OCI-LY7 (cell line): ENCODE measurements at regions of chr2 and their contacts with region 1.

Region 1: DNA sequence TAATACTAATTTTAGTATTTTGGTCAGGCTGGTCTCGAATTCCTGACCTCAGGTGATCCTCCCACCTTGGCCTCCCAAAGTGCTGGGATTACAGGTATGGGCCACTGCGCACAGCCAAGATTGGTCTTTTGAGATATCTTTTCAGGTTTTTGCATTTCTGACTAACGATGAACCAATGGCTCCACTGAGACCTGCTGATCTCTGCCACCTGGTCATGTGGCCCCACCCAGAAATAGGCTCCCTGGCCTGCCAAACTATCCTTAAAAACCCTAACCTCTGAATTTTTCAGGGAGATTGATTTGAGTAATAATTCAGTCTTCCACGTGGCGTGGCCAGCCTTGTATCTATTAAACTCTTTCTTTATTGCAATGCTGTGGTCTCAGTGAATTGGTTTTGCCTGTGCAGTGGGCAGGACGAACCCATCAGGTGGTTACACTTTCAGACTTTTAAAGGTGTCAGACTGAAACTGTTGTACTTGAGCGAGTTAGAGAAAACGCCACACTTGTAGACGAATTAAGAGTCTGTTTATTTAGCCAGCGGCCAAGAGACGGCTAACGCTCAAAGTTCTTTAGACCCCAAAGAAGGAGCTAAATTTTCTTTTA is 85.8 kb upstream of the MSH6 start:
- DNase-seq: peak; percentile 79
- H3K4me3 ChIP-seq: peak overlapping the region; percentile 99
- H3K27ac ChIP-seq: peak overlapping the region; percentile 97
- H3K4me1 ChIP-seq: peaks cover 58% of the 10 kb centered on the region
- CTCF ChIP-seq: no peak

Region 2: GRCh38 chr2:47402805-47403608 is 294.1 kb before region 1 on chr2 and contains the start of gene MSH2:
- CTCF ChIA-PET with region 1: no interaction called
- POLR2A ChIA-PET with region 1: no interaction called
- intact Hi-C with region 1: loop called (anchors 5 kb)
- DNase-seq: peak; percentile 98
- H3K4me3 ChIP-seq: peak within 1 kb of the TSS; percentile 86
- H3K27ac ChIP-seq: peak within 1 kb of the TSS; percentile 68
- H3K4me1 ChIP-seq: peaks cover 20% of the 10 kb centered on the region
- CTCF ChIP-seq: no peak; the same call in 1 of the 2 replicates
- total RNA-seq, gene MSH2: 96.8 and 107 TPM in 2 replicates

Region 3: GRCh38 chr2:47520825-47521665 is 176.1 kb before region 1 on chr2:
- CTCF ChIA-PET with region 1: no interaction called
- POLR2A ChIA-PET with region 1: interaction called, 12 read pairs
- intact Hi-C with region 1: loop called (anchors 1 kb)
- DNase-seq: peak; percentile 97
- H3K4me3 ChIP-seq: peak overlapping the region; percentile 77
- H3K27ac ChIP-seq: peak overlapping the region; percentile 96
- H3K4me1 ChIP-seq: peaks cover 60% of the 10 kb centered on the region
- CTCF ChIP-seq: peak; percentile 66

Region 4: GRCh38 chr2:47662552-47662951 is 34.5 kb before region 1 on chr2:
- CTCF ChIA-PET with region 1: no interaction called
- POLR2A ChIA-PET with region 1: interaction called, 229 read pairs
- intact Hi-C with region 1: loop called (anchors 1 kb)
- DNase-seq: peak; percentile 73
- H3K4me3 ChIP-seq: peak overlapping the region; percentile 55
- H3K27ac ChIP-seq: peak overlapping the region; percentile 84
- H3K4me1 ChIP-seq: peaks cover 77% of the 10 kb centered on the region
- CTCF ChIP-seq: no peak

Region 5: GRCh38 chr2:47719099-47719498 is 22.0 kb after region 1 on chr2:
- CTCF ChIA-PET with region 1: no interaction called
- POLR2A ChIA-PET with region 1: interaction called, 242 read pairs
- intact Hi-C with region 1: loop called (anchors 1 kb)
- DNase-seq: peak; percentile 83
- H3K4me3 ChIP-seq: peak overlapping the region; percentile 33
- H3K27ac ChIP-seq: peak overlapping the region; percentile 100
- H3K4me1 ChIP-seq: peaks cover 100% of the 10 kb centered on the region
- CTCF ChIP-seq: no peak

Region 6: GRCh38 chr2:47741094-47741493 is 44.0 kb after region 1 on chr2:
- CTCF ChIA-PET with region 1: no interaction called
- POLR2A ChIA-PET with region 1: interaction called, 39 read pairs
- intact Hi-C with region 1: loop called (anchors 1 kb)
- DNase-seq: no peak
- H3K4me3 ChIP-seq: no peak overlapping the region
- H3K27ac ChIP-seq: peak overlapping the region; percentile 32
- H3K4me1 ChIP-seq: peaks cover 68% of the 10 kb centered on the region
- CTCF ChIP-seq: no peak

Region 7: DNA sequence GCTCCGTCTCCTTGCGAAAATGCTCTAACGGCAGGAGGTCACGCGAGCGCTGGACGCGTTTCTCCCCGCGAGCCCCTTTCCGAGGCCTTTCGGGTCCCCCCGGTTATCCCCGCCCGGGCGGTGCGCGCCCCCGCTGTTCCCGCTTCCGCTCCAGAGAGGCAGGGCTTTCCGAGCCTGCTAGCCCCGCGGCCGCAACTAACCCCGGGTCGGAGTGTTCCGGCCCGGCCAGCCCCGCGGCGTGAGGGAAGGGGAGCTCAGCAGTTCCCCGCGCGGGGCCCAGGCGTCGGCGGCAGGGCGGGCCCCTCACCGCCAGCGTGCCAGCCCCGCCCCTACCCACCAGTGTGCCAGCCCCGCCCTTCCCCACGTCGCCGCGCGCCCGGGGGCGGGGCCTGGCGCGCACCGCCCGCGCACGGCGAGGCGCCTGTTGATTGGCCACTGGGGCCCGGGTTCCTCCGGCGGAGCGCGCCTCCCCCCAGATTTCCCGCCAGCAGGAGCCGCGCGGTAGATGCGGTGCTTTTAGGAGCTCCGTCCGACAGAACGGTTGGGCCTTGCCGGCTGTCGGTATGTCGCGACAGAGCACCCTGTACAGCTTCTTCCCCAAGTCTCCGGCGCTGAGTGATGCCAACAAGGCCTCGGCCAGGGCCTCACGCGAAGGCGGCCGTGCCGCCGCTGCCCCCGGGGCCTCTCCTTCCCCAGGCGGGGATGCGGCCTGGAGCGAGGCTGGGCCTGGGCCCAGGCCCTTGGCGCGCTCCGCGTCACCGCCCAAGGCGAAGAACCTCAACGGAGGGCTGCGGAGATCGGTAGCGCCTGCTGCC is 85.8 kb after region 1 on chr2 and contains the start of gene MSH6:
- CTCF ChIA-PET with region 1: no interaction called
- POLR2A ChIA-PET with region 1: interaction called, 11 read pairs
- intact Hi-C with region 1: loop called (anchors 5 kb)
- DNase-seq: peak; percentile 93
- H3K4me3 ChIP-seq: peak within 1 kb of the TSS; percentile 100
- H3K27ac ChIP-seq: peak within 1 kb of the TSS; percentile 93
- H3K4me1 ChIP-seq: peaks cover 54% of the 10 kb centered on the region
- CTCF ChIP-seq: no peak; the same call in 1 of the 2 replicates
- total RNA-seq, gene MSH6: 291 and 303 TPM in 2 replicates